A549 (cell line): ENCODE measurements at regions of chr2 and their contacts with region 1.

Region 1: GRCh38 chr2:207746131-207746530 is 23.6 kb downstream of the FZD5 start:
- DNase-seq: peak; percentile 41 to 81
- ATAC-seq: peak; percentile 81 to 82
- H3K4me3 ChIP-seq: no peak overlapping the region
- H3K27ac ChIP-seq: peak overlapping the region; percentile 1 to 74; a peak in 3 of 6 replicates
- H3K4me1 ChIP-seq: peaks cover 52% of the 10 kb centered on the region
- CTCF ChIP-seq: peak; percentile 98
- EP300 ChIP-seq: no peak
- POLR2A ChIP-seq: no peak
- RAD21 ChIP-seq: peak; percentile 98 to 99

Region 2: DNA sequence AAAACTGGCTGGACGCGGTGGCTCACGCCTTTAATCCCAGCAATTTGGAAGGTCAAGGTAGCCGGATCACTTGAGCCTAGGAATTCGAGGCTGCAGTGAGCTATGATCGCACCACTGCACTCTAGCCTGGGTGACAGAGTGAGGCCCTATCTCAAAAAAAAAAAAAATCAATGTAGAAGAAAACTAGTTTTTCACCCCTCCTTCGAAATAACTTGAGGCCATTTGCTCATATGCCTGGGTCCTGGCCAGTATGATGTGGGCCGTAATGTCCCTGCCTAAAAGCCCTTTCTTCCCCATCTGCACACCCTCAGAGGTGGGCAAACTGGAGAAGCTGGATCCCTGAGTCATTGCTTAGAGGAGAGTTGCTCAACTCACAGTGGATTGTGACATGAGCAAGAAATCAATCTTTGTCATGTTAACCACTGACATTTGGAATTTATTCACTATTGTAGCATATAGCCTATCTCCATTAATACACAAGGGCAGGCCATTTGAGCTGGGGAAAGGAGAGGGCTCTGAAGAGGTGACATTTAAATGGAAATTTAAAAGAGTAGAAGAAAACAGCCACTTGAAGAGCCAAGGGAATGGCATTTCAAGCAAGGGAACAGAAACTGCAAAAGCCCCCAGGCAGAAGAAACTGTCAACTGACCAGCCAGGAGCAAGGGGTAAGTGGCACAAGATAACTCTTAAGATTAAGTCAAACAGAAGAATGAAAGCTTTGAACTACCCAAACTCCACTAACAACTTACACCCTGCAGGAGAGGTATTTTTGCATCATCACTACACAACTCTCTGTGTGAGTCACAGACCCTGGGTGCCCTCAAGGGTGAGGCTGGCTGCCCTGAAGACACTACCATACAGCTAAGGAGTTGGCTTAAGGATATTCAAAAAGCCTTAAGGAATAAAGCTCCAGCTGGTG is 113.3 kb before region 1 on chr2:
- CTCF ChIA-PET with region 1: interaction called, 24 read pairs
- POLR2A ChIA-PET with region 1: no interaction called
- DNase-seq: peak; percentile 44 to 89
- ATAC-seq: peak; percentile 93 to 96
- H3K4me3 ChIP-seq: peak overlapping the region; percentile 21; the same call in 1 of the 3 replicates
- H3K27ac ChIP-seq: peak overlapping the region; percentile 89 to 94
- H3K4me1 ChIP-seq: peaks cover 53% of the 10 kb centered on the region
- CTCF ChIP-seq: no peak
- EP300 ChIP-seq: peak; percentile 7 to 58; a peak in 3 of 5 replicates
- POLR2A ChIP-seq: no peak
- RAD21 ChIP-seq: peak in 1 of 2 experiments; percentile 15; a peak in 2 of 5 replicates

Region 3: DNA sequence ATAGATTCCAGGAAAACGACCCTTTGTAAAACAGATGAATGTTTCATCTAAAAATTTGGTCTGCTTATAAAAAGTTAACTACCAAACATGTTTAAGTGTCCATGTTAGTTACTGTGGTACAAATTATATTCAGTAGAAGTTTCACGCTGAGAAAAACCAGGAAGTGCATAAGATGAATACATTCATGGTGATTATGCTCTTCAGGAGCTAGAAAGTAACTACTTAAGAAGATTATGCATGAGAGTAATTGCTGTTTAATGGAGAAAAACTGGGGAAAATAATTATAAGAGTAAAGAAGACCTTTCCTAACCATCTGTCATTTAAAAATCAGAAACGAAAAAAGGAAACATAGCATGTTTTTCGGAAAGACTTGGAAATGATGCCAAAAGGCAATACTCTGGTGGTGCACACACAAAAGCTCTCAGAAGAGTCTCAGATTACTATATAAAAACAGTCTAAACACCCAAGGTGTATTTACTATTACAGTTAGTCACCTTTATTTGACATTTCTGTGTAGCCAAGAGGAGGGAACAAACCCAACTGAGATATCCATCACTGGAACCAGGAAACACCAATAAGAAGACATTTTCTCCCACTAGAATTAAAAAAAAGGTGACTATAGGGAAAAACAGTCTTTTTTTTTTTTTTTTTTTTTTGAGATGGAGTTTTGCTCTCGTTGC is 82.1 kb before region 1 on chr2:
- CTCF ChIA-PET with region 1: no interaction called
- POLR2A ChIA-PET with region 1: no interaction called
- DNase-seq: no peak
- ATAC-seq: peak in 1 of 2 experiments; percentile 54; a peak in 3 of 6 replicates
- H3K4me3 ChIP-seq: no peak overlapping the region
- H3K27ac ChIP-seq: peak overlapping the region in 1 of 2 experiments; percentile 33; a peak in 1 of 6 replicates
- H3K4me1 ChIP-seq: peaks cover 6% of the 10 kb centered on the region; the same call in 2 of the 3 replicates
- CTCF ChIP-seq: no peak
- EP300 ChIP-seq: no peak
- POLR2A ChIP-seq: no peak
- RAD21 ChIP-seq: no peak

Region 4: GRCh38 chr2:207734264-207734635 is 11.9 kb before region 1 on chr2:
- CTCF ChIA-PET with region 1: interaction called, 29 read pairs
- POLR2A ChIA-PET with region 1: no interaction called
- DNase-seq: peak in 1 of 2 experiments; percentile 75
- ATAC-seq: peak; percentile 97 to 99
- H3K4me3 ChIP-seq: no peak overlapping the region
- H3K27ac ChIP-seq: peak overlapping the region in 1 of 2 experiments; percentile 9; a peak in 1 of 6 replicates
- H3K4me1 ChIP-seq: peaks cover 27% of the 10 kb centered on the region
- CTCF ChIP-seq: peak; percentile 83
- EP300 ChIP-seq: no peak
- POLR2A ChIP-seq: no peak
- RAD21 ChIP-seq: peak; percentile 87 to 91

Region 5: GRCh38 chr2:207769597-207770486 is 23.7 kb after region 1 on chr2 and contains the start of gene FZD5:
- CTCF ChIA-PET with region 1: interaction called, 64 read pairs
- POLR2A ChIA-PET with region 1: interaction called, 6 read pairs
- DNase-seq: peak; percentile 93 to 97
- ATAC-seq: peak; percentile 82 to 87
- H3K4me3 ChIP-seq: peak within 1 kb of the TSS; percentile 88
- H3K27ac ChIP-seq: peak within 1 kb of the TSS; percentile 94 to 96
- H3K4me1 ChIP-seq: peaks cover 38% of the 10 kb centered on the region
- CTCF ChIP-seq: peak; percentile 64
- EP300 ChIP-seq: no peak; a peak in 1 of 5 replicates
- POLR2A ChIP-seq: peak; percentile 84
- RAD21 ChIP-seq: peak; percentile 67 to 87
- polyA plus RNA-seq, gene FZD5: 6.7 and 7.5 TPM in 2 replicates

Region 6: GRCh38 chr2:207783514-207783913 is 37.4 kb after region 1 on chr2:
- CTCF ChIA-PET with region 1: no interaction called
- POLR2A ChIA-PET with region 1: no interaction called
- DNase-seq: no peak
- ATAC-seq: no peak
- H3K4me3 ChIP-seq: no peak overlapping the region
- H3K27ac ChIP-seq: peak overlapping the region; percentile 56 to 71; a peak in 3 of 6 replicates
- H3K4me1 ChIP-seq: peaks cover 41% of the 10 kb centered on the region
- CTCF ChIP-seq: no peak
- EP300 ChIP-seq: no peak
- POLR2A ChIP-seq: no peak
- RAD21 ChIP-seq: no peak

Region 7: GRCh38 chr2:207995887-207996286 is 249.8 kb after region 1 on chr2:
- CTCF ChIA-PET with region 1: interaction called, 10 read pairs
- POLR2A ChIA-PET with region 1: no interaction called
- DNase-seq: no peak
- ATAC-seq: no peak
- H3K4me3 ChIP-seq: no peak overlapping the region
- H3K27ac ChIP-seq: no peak overlapping the region
- H3K4me1 ChIP-seq: 0 out of 3 replicates have a peak, but pooled peaks cover 3% of the 10 kb centered on the region
- CTCF ChIP-seq: no peak
- EP300 ChIP-seq: no peak
- POLR2A ChIP-seq: no peak
- RAD21 ChIP-seq: no peak

Region 8: DNA sequence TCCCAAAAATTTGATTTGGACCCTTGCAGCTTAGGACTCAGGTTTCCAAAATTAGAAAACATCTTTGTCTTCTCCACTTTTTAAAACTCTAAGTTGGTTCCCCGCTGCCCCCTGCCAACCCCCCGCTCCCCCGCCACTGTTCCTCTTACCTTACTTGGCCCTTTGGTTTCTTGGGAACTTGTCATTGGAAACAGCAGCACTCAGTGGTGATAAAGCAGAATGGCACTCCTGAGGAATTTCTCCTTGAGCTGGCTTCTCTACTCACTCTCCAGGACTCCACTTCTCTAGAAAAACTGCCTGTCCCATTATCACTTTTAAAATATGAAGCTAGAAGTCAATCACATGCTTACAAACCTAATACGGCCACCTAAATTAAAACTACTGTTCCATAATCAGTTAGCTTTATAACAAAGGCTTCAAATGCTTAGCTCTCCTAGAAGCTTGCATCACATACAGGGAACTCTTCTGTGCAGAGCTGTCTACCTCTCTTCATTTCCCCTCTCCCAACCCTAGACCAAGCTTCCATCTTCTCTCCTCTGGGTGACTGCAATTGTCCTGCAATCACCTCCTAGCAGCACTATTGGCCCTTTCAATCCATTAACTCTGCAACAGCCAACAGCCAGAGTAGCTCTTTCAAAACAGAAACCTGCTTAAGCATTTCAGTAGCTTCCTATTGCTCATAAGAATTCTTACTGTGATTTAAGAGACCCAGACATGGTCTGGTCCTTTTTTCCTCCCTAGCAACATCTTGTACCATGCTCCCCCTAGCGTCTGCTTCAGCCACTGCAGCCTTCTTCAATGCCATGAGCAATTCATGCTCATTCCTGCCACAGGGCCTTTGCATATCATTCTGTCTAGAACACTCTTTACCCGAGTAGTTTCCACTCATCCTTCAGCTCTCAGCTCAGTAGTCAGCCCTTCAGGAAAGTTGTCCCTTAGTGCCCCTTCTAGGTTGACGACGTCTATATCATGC is 294.4 kb after region 1 on chr2:
- CTCF ChIA-PET with region 1: interaction called, 191 read pairs
- POLR2A ChIA-PET with region 1: interaction called, 4 read pairs
- DNase-seq: peak; percentile 53 to 78
- ATAC-seq: peak; percentile 90 to 91
- H3K4me3 ChIP-seq: no peak overlapping the region
- H3K27ac ChIP-seq: no peak overlapping the region; a peak in 1 of 6 replicates
- H3K4me1 ChIP-seq: no peaks in the 10 kb centered on the region
- CTCF ChIP-seq: peak; percentile 68
- EP300 ChIP-seq: no peak
- POLR2A ChIP-seq: no peak
- RAD21 ChIP-seq: peak; percentile 58 to 76

Region 9: GRCh38 chr2:208072250-208072892 is 326.2 kb after region 1 on chr2:
- CTCF ChIA-PET with region 1: interaction called, 202 read pairs
- POLR2A ChIA-PET with region 1: interaction called, 4 read pairs
- DNase-seq: peak; percentile 54 to 69
- ATAC-seq: peak; percentile 95 to 97
- H3K4me3 ChIP-seq: no peak overlapping the region
- H3K27ac ChIP-seq: no peak overlapping the region
- H3K4me1 ChIP-seq: no peaks in the 10 kb centered on the region
- CTCF ChIP-seq: peak; percentile 87
- EP300 ChIP-seq: no peak
- POLR2A ChIP-seq: no peak
- RAD21 ChIP-seq: peak; percentile 91